Caco-2 (cell line): ENCODE measurements at regions of chr16 and their contacts with region 1.

Region 1: DNA sequence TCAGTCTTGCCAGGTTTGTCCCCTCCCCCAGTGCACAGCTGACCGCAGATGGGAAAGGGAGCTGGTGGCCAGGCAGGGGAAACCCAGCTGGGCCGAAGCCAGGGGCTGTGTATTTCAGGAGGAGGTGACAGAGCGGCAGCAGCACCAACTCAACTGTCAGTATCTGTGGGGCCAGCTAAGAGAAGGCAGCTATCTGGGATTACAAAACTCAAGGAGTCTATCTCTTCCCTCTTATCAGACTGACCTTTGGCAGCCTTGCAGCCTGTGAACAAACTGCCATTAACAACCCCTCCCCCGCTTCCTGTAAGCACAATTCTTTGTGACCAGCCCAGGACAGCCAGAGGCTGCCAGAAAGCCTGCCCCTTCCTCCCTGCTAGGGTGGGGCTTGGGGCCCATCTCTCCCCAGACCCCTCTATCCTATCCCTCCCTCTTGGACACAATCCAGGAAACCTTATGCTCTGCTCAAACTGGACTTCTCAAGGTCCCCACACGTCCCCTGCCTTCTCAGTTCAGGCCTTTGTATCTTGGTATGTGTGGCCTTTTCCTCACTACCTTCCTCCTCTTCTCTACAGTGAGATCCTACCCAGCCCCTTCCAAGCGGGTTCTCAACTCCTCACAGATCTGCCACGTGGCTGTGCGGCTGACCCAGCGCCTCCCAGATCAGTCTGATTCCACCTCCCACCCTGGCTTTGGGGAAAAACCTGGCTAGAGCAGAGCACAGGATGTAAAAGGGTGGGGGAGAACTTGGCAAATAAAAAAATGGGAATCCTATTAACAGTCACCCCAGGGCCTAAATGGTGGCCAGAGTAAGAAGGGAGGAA is 10.5 kb downstream of the ST3GAL2 start:
- DNase-seq: peak; percentile 96 to 99
- H3K4me3 ChIP-seq: peak overlapping the region; percentile 17
- H3K4me3 Mint-ChIP-seq: peak overlapping the region; percentile 66
- H3K27ac Mint-ChIP-seq: peak overlapping the region; percentile 98
- H3K4me1 ChIP-seq: peaks cover 56% of the 10 kb centered on the region
- H3K4me1 Mint-ChIP-seq: peaks cover 46% of the 10 kb centered on the region
- H3K27me3 ChIP-seq: no peaks in the 10 kb centered on the region
- H3K27me3 Mint-ChIP-seq: no peaks in the 10 kb centered on the region
- CTCF ChIP-seq: no peak

Region 2: GRCh38 chr16:70395345-70395901 is 33.0 kb before region 1 on chr16:
- CTCF ChIA-PET with region 1: interaction called, 3 read pairs
- POLR2A ChIA-PET with region 1: interaction called, 16 read pairs
- intact Hi-C with region 1: loop called (anchors 1 kb)
- DNase-seq: peak; percentile 87 to 90
- H3K4me3 ChIP-seq: no peak overlapping the region
- H3K4me3 Mint-ChIP-seq: no peak overlapping the region
- H3K27ac Mint-ChIP-seq: no peak overlapping the region
- H3K4me1 ChIP-seq: peaks cover 20% of the 10 kb centered on the region
- H3K4me1 Mint-ChIP-seq: peaks cover 7% of the 10 kb centered on the region
- H3K27me3 ChIP-seq: no peaks in the 10 kb centered on the region
- H3K27me3 Mint-ChIP-seq: no peaks in the 10 kb centered on the region
- CTCF ChIP-seq: peak; percentile 92 to 95

Region 3: DNA sequence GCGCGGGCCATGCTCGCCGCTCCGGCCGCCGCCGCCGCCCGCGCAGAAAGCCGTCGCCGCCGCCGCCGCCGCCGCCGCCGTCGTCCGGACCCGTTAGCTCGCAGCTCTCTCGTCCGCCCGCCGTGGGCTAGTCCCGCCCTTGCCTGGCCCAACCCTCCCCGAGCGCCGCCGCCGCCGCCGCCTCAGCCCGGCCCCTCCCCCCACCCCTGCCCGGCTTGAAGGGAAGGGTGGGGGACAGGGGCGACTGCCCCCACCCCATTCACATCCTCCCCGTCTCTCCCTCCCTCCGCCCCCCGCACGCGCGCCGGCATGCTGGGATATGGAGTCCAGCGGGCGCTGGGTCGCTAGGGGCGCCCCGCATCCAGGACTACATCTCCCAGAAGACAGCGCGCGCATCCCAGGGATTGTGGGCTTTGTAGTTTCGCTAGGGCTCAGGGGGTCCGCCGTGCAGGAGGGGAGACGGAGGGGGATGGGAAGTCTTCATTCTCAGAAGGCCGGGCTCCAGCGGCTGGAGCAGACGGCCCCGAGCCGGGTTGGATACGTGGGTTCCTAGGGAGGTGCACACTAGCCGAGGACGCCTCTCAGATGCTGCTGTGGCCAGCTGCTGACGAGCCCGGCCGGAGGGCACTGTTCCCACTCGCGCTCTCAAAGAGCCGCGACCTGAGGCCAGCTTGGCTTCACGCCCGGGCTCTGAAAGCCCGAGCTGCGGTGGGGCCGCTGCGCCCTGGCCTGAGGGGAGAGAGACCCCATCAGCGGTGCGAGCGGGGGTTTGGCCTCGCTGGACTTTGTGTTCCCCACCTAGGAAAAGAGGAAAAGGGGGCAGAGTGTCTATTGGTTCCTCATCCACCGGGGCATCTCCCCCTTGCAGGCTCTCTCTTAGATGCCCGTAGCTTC is 10.8 kb after region 1 on chr16 and contains the start of gene ST3GAL2:
- CTCF ChIA-PET with region 1: no interaction called
- POLR2A ChIA-PET with region 1: interaction called, 3 read pairs
- intact Hi-C with region 1: loop called (anchors 1 kb)
- DNase-seq: peak; percentile 96 to 97
- H3K4me3 ChIP-seq: peak within 1 kb of the TSS; percentile 90
- H3K4me3 Mint-ChIP-seq: peak within 1 kb of the TSS; percentile 92
- H3K27ac Mint-ChIP-seq: peak within 1 kb of the TSS; percentile 67
- H3K4me1 ChIP-seq: peaks cover 45% of the 10 kb centered on the region
- H3K4me1 Mint-ChIP-seq: peaks cover 20% of the 10 kb centered on the region
- H3K27me3 ChIP-seq: no peaks in the 10 kb centered on the region
- H3K27me3 Mint-ChIP-seq: no peaks in the 10 kb centered on the region
- CTCF ChIP-seq: peak; percentile 23 to 46
- total RNA-seq, gene ST3GAL2: 30.3 and 31.1 TPM in 2 replicates

Region 4: DNA sequence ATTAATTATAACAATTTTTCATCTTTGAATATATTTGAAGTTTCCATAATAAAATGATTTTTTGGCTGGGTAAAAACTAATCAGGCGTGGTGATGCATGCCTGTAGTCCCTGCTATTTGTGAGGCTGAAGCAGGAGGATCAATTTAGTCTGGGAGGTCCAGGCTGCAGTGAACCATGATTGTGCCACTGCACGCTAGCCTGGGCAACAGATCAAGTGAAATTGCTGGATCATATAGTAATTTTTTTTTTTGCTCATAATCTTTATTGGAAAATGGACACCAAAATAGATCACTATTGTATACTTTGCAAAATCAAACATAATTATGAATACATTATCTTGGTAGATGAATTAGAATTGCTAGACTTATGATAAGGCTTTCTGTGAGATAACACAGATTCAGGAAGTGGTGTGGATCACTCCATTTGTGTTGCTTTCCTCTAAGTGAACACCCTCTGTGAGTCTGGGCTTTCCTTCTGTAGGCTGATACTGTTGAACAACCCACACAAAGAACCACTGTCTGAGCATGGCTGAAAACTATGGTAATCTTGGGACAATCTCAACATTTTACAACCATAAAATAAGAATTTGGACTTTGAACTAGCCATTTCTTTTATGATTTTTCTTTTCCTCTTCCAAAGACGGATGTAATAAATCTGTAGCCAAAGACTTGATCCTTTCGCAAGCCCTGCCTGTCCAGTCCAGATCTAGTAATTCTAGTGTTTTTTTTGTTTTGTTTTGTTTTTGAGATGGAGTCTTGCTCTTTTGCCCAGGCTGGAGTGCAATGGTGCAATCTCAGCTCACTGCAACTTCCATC is 16.1 kb after region 1 on chr16:
- CTCF ChIA-PET with region 1: no interaction called
- POLR2A ChIA-PET with region 1: interaction called, 9 read pairs
- intact Hi-C with region 1: loop called (anchors 1 kb)
- DNase-seq: peak; percentile 69 to 81
- H3K4me3 ChIP-seq: no peak overlapping the region
- H3K4me3 Mint-ChIP-seq: no peak overlapping the region
- H3K27ac Mint-ChIP-seq: peak overlapping the region; percentile 84
- H3K4me1 ChIP-seq: peaks cover 45% of the 10 kb centered on the region
- H3K4me1 Mint-ChIP-seq: peaks cover 11% of the 10 kb centered on the region
- H3K27me3 ChIP-seq: no peaks in the 10 kb centered on the region
- H3K27me3 Mint-ChIP-seq: no peaks in the 10 kb centered on the region
- CTCF ChIP-seq: no peak

Region 5: DNA sequence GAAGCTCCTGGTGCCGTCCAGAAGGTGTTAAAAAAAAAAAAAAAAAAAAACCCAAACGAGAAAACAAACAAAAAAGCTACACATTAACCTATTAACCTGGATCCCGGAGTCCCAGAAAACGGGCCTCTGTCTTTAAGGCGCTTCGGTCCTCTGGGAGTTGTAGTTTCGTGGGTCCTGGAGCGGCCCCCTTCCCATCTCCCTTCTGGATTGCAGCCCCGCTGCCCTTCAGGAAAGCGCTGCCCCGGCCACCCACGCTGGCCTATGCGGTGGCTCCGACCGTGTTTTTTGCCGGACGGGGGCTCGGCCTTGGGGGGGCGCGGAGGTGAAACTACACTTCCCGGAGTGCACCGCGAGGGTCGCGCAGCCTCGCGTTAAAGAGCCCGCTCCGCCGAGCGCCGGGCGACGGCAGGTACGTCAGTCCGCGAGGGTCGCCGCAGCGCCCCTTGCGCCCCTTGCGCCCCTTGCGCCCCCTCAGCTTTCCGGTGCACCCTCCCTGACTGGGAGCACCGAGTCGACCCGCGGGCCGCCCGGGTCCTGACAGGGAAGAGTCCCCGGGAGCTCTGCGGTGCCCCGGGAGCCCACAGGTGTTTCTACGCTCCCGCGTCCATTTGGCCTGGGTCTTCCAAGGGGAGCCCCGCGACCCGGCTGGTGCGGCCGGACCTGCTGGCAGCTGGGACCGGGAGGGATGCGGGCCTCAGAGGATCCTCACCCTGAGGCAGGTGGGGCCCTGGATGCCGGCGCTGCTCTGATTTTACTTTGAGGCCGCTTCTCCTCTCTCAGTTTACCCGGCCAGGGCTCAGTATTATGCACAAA is 26.0 kb after region 1 on chr16 and contains the start of gene FCSK:
- CTCF ChIA-PET with region 1: interaction called, 11 read pairs
- POLR2A ChIA-PET with region 1: interaction called, 20 read pairs
- intact Hi-C with region 1: loop called (anchors 1 kb)
- DNase-seq: peak; percentile 87 to 90
- H3K4me3 ChIP-seq: peak within 1 kb of the TSS; percentile 79
- H3K4me3 Mint-ChIP-seq: peak within 1 kb of the TSS; percentile 89
- H3K27ac Mint-ChIP-seq: peak within 1 kb of the TSS; percentile 97
- H3K4me1 ChIP-seq: peaks cover 11% of the 10 kb centered on the region
- H3K4me1 Mint-ChIP-seq: peaks cover 6% of the 10 kb centered on the region
- H3K27me3 ChIP-seq: no peaks in the 10 kb centered on the region
- H3K27me3 Mint-ChIP-seq: no peaks in the 10 kb centered on the region
- CTCF ChIP-seq: peak; percentile 24 to 36
- total RNA-seq, gene FCSK: 25.5 and 27.9 TPM in 2 replicates

Region 6: DNA sequence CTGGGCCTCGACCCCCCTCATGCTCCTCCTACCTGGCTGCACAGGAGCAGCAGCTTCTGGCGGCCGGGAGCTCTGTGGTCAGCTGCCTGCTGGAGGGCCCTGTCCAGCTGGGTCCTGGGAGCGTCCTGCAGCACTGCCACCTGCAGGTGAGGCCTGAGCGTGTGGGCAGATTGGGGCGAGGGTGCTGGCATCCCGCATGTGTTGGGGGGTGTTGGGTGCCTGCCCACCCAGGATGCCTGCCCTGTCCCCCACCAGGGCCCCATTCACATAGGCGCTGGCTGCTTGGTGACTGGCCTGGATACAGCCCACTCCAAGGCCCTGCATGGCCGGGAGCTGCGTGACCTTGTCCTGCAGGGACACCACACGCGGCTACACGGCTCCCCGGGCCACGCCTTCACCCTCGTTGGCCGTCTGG is 42.5 kb after region 1 on chr16:
- CTCF ChIA-PET with region 1: interaction called, 11 read pairs
- POLR2A ChIA-PET with region 1: interaction called, 4 read pairs
- intact Hi-C with region 1: loop called (anchors 5 kb)
- DNase-seq: peak; percentile 71 to 80
- H3K4me3 ChIP-seq: no peak overlapping the region
- H3K4me3 Mint-ChIP-seq: no peak overlapping the region
- H3K27ac Mint-ChIP-seq: peak overlapping the region; percentile 36
- H3K4me1 ChIP-seq: peaks cover 8% of the 10 kb centered on the region; the same call in 1 of the 2 replicates
- H3K4me1 Mint-ChIP-seq: peaks cover 7% of the 10 kb centered on the region
- H3K27me3 ChIP-seq: no peaks in the 10 kb centered on the region
- H3K27me3 Mint-ChIP-seq: no peaks in the 10 kb centered on the region
- CTCF ChIP-seq: peak; percentile 82 to 86